CD4-positive, alpha-beta T cell (primary cell): ENCODE measurements at regions of chr19 and their contacts with region 1.

Region 1: GRCh38 chr19:10194500-10195289 is at the start of gene DNMT1:
- DNase-seq: peak; percentile 86 to 98 (median 96)
- ATAC-seq: peak; percentile 93
- H3K4me3 ChIP-seq: peak within 1 kb of the TSS; percentile 99
- H3K4me3 Mint-ChIP-seq: peak within 1 kb of the TSS; percentile 98
- H3K27ac ChIP-seq: peak within 1 kb of the TSS; percentile 77 to 80
- H3K27ac Mint-ChIP-seq: peak within 1 kb of the TSS; percentile 88
- H3K4me1 ChIP-seq: peaks cover 49% of the 10 kb centered on the region
- H3K4me1 Mint-ChIP-seq: peaks cover 32% of the 10 kb centered on the region
- H3K27me3 ChIP-seq: no peaks in the 10 kb centered on the region
- H3K27me3 Mint-ChIP-seq: no peaks in the 10 kb centered on the region
- CTCF ChIP-seq: no peak
- total RNA-seq, gene DNMT1: 159 to 160 TPM

Region 2: GRCh38 chr19:10106100-10106936 is 88.4 kb before region 1 on chr19 and contains the start of gene PPAN:
- CTCF ChIA-PET with region 1: no interaction called
- POLR2A ChIA-PET with region 1: no interaction called
- intact Hi-C with region 1: loop called in 1 of 2 experiments (anchors 5 kb)
- DNase-seq: peak; percentile 94 to 100 (median 98)
- ATAC-seq: peak; percentile 59
- H3K4me3 ChIP-seq: peak within 1 kb of the TSS; percentile 73
- H3K4me3 Mint-ChIP-seq: peak within 1 kb of the TSS; percentile 93
- H3K27ac ChIP-seq: peak within 1 kb of the TSS; percentile 94 to 98
- H3K27ac Mint-ChIP-seq: peak within 1 kb of the TSS; percentile 95
- H3K4me1 ChIP-seq: peaks cover 86% of the 10 kb centered on the region
- H3K4me1 Mint-ChIP-seq: peaks cover 58% of the 10 kb centered on the region
- H3K27me3 ChIP-seq: no peaks in the 10 kb centered on the region
- H3K27me3 Mint-ChIP-seq: no peaks in the 10 kb centered on the region
- CTCF ChIP-seq: no peak
- total RNA-seq, gene PPAN: 119 to 127 TPM

Region 3: DNA sequence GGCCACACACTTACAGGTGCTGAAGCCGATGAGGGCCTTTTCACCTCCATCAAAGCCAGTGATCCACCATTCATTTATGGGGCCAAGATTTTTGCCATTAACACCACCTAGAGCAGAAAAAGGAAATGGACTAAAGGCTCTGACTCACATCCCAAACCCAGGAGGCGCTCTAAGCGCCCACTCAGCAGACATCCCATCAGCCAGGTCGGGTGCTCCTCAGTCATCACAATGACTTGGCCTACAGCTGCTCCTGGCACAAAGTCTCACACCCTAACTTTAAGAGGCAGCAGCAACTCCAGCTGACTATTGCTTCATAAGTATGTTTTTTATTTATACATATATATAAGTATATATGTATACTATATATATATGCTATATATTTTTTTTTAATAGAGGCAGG is 38.9 kb before region 1 on chr19:
- CTCF ChIA-PET with region 1: no interaction called
- POLR2A ChIA-PET with region 1: no interaction called
- intact Hi-C with region 1: no loop called
- DNase-seq: no peak
- ATAC-seq: no peak
- H3K4me3 ChIP-seq: no peak overlapping the region
- H3K4me3 Mint-ChIP-seq: no peak overlapping the region
- H3K27ac ChIP-seq: no peak overlapping the region
- H3K27ac Mint-ChIP-seq: no peak overlapping the region
- H3K4me1 ChIP-seq: no peaks in the 10 kb centered on the region
- H3K4me1 Mint-ChIP-seq: no peaks in the 10 kb centered on the region
- H3K27me3 ChIP-seq: no peaks in the 10 kb centered on the region
- H3K27me3 Mint-ChIP-seq: no peaks in the 10 kb centered on the region
- CTCF ChIP-seq: no peak

Region 4: DNA sequence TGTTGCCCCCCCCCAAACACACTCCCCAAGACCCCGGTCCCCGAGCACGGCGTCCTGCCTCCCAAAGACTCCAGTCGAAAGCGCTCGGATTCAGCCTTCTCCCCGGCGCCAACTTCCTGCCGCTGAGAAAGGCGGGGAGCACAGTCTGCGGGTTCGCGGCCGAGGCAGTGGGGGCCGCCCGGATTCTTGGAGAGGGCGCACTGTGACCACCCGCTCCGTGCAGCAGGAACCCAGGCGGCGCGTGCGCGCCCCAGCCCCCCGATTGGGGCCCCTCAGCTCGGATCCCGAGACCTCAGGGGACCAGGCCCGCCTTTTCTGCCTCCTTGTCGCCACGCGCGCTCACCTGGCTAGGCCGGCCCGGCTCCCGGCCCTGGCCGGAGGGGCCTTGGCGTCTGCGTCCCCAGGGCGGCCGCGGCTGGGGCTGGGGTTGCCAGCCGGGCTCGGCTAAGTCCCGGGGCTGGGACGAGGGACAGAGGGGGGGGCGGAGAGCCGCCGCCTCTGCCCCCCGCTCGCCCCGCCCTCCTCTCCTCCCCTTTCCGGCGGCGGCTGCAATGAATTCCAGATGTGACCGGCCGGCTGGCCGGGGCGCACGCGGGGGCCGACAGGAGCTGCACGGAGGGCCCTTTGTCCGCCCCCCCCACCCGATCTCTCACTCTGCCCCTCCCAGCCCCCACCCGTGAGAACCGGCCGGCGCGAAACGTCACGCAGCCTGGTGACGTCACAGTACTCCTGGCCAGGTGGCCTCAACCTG is 36.3 kb after region 1 on chr19 and contains the start of gene S1PR2:
- CTCF ChIA-PET with region 1: interaction called, 4 read pairs
- POLR2A ChIA-PET with region 1: no interaction called
- intact Hi-C with region 1: loop called (anchors 5 kb)
- DNase-seq: peak; percentile 37 to 91 (median 68)
- ATAC-seq: peak; percentile 59
- H3K4me3 ChIP-seq: peak within 1 kb of the TSS; percentile 96
- H3K4me3 Mint-ChIP-seq: peak within 1 kb of the TSS; percentile 92
- H3K27ac ChIP-seq: peak within 1 kb of the TSS; percentile 86 to 90
- H3K27ac Mint-ChIP-seq: peak within 1 kb of the TSS; percentile 92
- H3K4me1 ChIP-seq: peaks cover 57% of the 10 kb centered on the region
- H3K4me1 Mint-ChIP-seq: peaks cover 29% of the 10 kb centered on the region
- H3K27me3 ChIP-seq: no peaks in the 10 kb centered on the region
- H3K27me3 Mint-ChIP-seq: no peaks in the 10 kb centered on the region
- CTCF ChIP-seq: no peak
- total RNA-seq, gene S1PR2: 14.6 to 17.2 TPM

Region 5: DNA sequence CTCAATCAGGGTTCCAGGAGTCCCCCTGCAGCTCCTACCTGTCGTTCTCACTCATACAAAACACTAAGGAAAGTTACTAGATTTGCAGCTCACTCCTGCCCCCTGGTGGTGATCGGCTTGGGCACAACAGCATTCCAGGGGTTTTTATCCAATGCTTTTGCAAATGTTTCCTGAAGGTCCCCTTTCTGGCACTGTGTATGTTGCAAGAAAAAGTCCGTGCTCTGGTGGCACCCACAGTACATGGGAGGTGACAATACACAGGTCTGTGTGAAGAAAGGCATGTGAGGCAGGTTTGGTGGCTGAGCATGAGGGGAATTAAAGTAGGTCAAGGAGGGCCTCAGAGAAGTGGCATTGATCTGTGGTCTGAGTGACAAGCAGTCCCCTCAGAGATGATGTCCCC is 194.3 kb after region 1 on chr19:
- CTCF ChIA-PET with region 1: no interaction called
- POLR2A ChIA-PET with region 1: no interaction called
- intact Hi-C with region 1: no loop called
- DNase-seq: peak; percentile 72 to 94 (median 82)
- ATAC-seq: peak; percentile 62
- H3K4me3 ChIP-seq: no peak overlapping the region
- H3K4me3 Mint-ChIP-seq: no peak overlapping the region
- H3K27ac ChIP-seq: no peak overlapping the region
- H3K27ac Mint-ChIP-seq: no peak overlapping the region
- H3K4me1 ChIP-seq: peaks cover 7% of the 10 kb centered on the region
- H3K4me1 Mint-ChIP-seq: peaks cover 4% of the 10 kb centered on the region
- H3K27me3 ChIP-seq: no peaks in the 10 kb centered on the region
- H3K27me3 Mint-ChIP-seq: no peaks in the 10 kb centered on the region
- CTCF ChIP-seq: peak; percentile 96